Uterus (tissue), 4 donors: ENCODE measurements at regions of chr14 and their contacts with region 1.

Region 1: GRCh38 chr14:77059276-77059915 is 30.9 kb upstream of the IRF2BPL start:
- DNase-seq: peak in 1 of 2 donors; percentile 49
- H3K4me3 ChIP-seq: no peak overlapping the region
- H3K27ac ChIP-seq: no peak overlapping the region
- H3K4me1 ChIP-seq: no peaks in the 10 kb centered on the region
- H3K27me3 ChIP-seq: no peaks in the 10 kb centered on the region
- CTCF ChIP-seq: peak in 1 of 4 experiments; percentile 6
- POLR2A ChIP-seq: no peak

Region 2: DNA sequence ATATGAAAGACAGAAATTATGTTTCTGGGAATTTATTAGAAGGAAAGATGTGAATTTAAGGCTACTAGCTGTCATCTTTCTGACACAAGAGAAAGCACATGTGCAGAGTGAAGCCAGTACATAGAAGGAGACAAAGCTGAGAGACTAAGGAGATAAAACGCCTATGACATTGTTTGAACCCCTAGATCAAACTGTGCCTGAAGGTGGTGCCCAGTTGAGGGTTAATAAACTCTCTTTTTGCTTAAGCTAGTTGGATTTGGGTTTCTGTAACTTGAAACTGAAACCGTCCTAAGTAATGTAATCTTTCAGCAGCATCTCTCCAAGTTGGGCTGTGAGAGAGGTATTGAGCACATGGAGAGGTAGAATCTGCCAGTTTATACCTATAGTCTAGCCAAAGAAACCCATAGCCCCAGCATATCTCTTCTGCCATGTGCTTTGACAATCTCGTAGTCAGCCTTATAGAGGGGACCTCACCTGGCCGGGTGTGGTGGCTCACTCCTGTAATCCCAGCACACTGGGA is 149.0 kb before region 1 on chr14:
- intact Hi-C with region 1: loop called (anchors 5 kb)
- DNase-seq: no peak
- H3K4me3 ChIP-seq: no peak overlapping the region
- H3K27ac ChIP-seq: no peak overlapping the region
- H3K4me1 ChIP-seq: peaks cover 0 to 2% of the 10 kb centered on the region in 2 donors
- H3K27me3 ChIP-seq: no peaks in the 10 kb centered on the region
- CTCF ChIP-seq: no peak
- POLR2A ChIP-seq: no peak

Region 3: GRCh38 chr14:77028384-77029231 is 30.8 kb before region 1 on chr14 and contains the start of gene IRF2BPL:
- intact Hi-C with region 1: no loop called
- DNase-seq: peak; percentile 99
- H3K4me3 ChIP-seq: peak within 1 kb of the TSS; percentile 77 to 89
- H3K27ac ChIP-seq: peak within 1 kb of the TSS; percentile 98 to 100
- H3K4me1 ChIP-seq: peaks cover 14 to 36% of the 10 kb centered on the region in 2 donors
- H3K27me3 ChIP-seq: no peaks in the 10 kb centered on the region
- CTCF ChIP-seq: no peak
- POLR2A ChIP-seq: peak; percentile 90 to 99
- total RNA-seq, gene IRF2BPL: 15.6 to 60.8 (median 36.6) TPM